Dendritic cell treated with granulocyte-macrophage colony-stimulating factor and Interleukin-4, amounts not matched to agents 40 ng/mL and 50 ng/mL, for 4 days (primary cell): ENCODE measurements at regions of chr1 and their contacts with region 1.

Region 1: DNA sequence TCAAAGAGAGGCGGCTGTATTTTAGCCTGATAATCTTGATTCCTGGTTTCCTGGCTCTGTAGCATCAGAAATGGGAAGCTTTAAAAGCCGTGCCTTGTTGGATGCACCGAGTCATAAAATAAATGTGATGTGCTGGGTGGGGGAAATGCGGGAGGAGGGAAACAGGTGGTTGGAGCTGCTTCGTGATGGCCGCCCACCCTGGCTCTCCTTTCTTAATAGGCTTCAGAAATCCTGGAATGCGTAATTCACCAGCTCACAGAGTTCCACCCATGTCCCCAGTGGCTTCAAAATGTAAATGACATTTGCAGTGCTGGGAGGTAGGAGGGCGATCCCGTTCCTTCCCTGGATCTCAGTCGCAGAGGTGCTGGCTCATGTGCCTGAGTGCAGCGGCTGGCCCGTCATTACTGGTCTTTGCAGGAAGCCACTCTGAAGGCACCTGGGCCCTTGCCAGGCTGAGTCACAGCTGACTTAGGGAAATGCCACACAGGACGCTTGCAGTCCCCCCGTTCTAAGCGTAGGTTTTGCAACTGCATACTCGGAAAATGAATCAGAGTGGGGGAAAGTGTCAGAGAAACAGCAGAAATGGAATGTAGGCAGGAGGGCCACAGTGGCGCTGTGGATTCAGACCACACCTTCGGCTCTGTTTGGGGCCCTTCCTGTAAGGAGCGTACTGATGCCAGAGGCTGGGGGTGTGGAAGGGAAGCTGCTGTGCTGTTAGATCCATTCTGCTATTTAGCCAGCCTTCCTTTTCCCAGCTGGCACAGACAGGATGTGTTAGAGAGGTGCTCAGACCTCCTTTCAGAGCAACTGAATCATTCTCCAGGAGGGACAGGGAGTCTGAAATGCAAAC is 37.6 kb downstream of the GALNT2 start:
- H3K4me3 Mint-ChIP-seq: peak overlapping the region; percentile 13
- H3K27ac Mint-ChIP-seq: peak overlapping the region; percentile 46
- H3K4me1 Mint-ChIP-seq: peaks cover 68% of the 10 kb centered on the region
- H3K27me3 Mint-ChIP-seq: no peaks in the 10 kb centered on the region

Region 2: GRCh38 chr1:230136453-230137336 is 32.1 kb after region 1 on chr1:
- intact Hi-C with region 1: no loop called
- H3K4me3 Mint-ChIP-seq: no peak overlapping the region
- H3K27ac Mint-ChIP-seq: no peak overlapping the region
- H3K4me1 Mint-ChIP-seq: peaks cover 27% of the 10 kb centered on the region
- H3K27me3 Mint-ChIP-seq: no peaks in the 10 kb centered on the region

Region 3: DNA sequence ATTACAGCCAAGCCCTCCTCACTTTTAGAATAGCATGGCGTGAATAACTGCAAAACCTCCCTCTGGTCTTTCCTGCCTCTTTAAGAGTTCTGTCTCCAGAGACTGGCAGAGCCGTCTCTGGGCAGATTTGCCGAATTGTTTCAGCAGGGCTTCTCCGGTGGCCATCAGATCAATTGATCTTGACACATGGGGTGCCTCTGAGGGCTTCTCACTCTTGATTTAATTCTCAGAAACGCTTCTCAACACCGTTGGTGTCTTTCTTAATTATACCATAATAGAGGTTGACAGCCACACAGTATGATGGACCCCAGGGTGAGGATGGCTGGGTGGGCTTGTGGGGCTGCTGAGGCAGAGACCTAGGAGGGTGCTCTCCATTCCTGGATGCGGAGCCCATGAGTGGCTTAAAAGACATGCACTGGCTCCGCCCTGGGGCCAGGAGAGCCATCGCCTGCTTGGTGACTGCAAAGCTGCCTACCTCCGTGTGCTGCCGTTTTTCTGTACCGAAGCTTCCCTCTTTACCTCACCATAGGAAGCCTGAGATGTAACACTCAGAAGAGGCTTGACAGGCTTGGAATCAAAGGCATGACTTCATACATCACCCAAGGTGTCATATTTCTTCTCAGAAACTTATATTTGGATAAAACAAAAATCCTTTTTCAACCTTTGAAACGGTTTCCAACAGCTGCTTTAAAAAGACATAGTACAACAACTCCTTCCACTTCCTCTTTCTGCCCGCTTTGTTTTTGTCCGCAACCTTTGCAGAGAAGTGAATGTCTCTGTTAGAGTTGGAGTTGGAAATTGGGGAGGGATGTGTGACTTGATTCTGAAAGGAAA is 45.3 kb after region 1 on chr1:
- intact Hi-C with region 1: loop called (anchors 5 kb)
- H3K4me3 Mint-ChIP-seq: peak overlapping the region; percentile 51
- H3K27ac Mint-ChIP-seq: peak overlapping the region; percentile 37
- H3K4me1 Mint-ChIP-seq: peaks cover 85% of the 10 kb centered on the region
- H3K27me3 Mint-ChIP-seq: no peaks in the 10 kb centered on the region

Region 4: DNA sequence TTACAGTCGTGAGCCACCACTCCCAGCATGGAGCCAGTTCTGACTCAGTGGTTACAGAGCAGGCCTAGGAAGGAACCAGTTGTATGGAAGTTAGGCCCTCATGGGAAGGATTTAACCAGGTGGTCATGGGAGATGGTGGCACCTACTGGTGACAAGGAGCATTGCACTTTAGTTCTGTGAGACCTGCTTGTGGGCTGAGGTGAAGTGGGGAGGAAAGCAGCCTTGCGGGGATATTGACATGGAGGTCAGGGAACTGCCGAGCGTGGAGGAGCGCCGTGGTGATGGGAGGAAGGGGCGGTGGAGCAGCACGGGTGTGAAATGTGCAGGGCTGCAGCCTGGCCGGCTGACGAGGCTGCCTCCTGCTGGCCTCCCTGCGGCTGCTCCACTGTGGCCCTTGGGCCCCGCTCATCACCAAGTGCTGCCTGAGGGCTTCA is 62.8 kb after region 1 on chr1:
- intact Hi-C with region 1: loop called (anchors 5 kb)
- H3K4me3 Mint-ChIP-seq: no peak overlapping the region
- H3K27ac Mint-ChIP-seq: no peak overlapping the region
- H3K4me1 Mint-ChIP-seq: peaks cover 44% of the 10 kb centered on the region
- H3K27me3 Mint-ChIP-seq: no peaks in the 10 kb centered on the region